GM10248 (cell line): ENCODE measurements at regions of chr20 and their contacts with region 1.

Region 1: GRCh38 chr20:31617432-31618104 is 12.5 kb downstream of the ID1 start:
- DNase-seq: peak; percentile 59
- CTCF ChIP-seq: no peak

Region 2: DNA sequence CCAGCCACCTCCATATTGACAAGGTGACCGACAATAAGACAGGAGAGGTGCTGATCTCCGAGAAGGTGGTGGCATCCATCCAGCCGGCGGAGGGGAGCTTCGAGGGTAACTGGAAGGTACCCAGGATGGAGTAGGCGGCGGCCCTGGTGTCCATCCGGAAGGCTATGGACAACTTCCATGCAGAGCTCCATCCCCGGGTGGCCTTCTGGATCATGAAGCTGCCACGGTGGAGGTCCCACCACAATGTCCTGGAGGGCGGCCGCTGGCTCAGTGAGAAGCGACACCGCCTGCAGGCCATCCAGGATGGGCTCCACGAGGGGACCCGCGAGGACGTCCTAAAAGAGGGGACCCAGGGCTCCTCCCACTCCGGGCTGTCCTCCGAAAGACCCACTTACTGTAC is 343.1 kb before region 1 on chr20:
- CTCF ChIA-PET with region 1: no interaction called
- POLR2A ChIA-PET with region 1: no interaction called
- DNase-seq: no peak
- CTCF ChIP-seq: no peak

Region 3: GRCh38 chr20:31605031-31605901 is 12.3 kb before region 1 on chr20 and contains the start of gene ID1:
- CTCF ChIA-PET with region 1: interaction called, 80 read pairs
- POLR2A ChIA-PET with region 1: interaction called, 7 read pairs
- DNase-seq: peak; percentile 91
- CTCF ChIP-seq: no peak

Region 4: DNA sequence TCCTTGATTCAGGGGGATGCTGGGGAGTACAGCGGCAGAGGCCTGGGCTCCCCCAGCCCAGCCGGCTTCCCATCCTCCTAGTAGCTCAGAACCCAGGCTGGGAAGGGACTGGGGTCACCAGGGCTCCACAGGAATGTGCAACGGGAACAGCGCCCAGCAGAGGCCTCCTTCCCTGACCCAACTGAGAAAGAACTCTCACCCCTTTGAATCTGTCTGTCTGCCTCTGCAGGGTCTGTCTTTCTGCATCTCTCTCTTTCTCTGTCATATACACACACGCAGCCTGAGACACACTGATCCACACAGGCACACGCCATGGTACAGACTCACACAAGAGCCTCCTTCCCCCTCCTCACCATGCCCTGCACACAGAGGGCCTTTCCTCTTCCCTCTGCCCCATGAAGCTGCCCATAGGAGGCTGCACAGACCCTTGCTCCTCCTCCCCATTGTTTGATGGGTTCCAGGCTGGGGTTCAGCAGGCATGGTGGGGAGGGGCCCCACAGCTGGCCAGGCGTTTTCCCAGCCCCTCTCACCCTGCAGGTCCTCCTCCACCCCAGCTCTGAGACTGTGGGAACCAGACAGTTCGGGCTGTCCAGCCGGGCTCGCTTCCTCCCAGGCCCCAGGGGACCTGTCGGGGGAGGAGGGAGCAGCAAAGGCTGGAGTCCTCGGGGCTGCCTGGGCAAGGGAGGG is 225.0 kb after region 1 on chr20:
- CTCF ChIA-PET with region 1: no interaction called
- POLR2A ChIA-PET with region 1: no interaction called
- DNase-seq: no peak
- CTCF ChIP-seq: no peak